Ascending aorta (tissue), 2 donors: ENCODE measurements at regions of chr1 and their contacts with region 1.

Region 1: GRCh38 chr1:111720274-111720976 is 18.8 kb downstream of the INKA2 start:
- DNase-seq: no peak
- H3K4me3 ChIP-seq: no peak overlapping the region
- H3K27ac ChIP-seq: peak overlapping the region; percentile 33 to 67
- H3K4me1 ChIP-seq: peaks cover 0 to 7% of the 10 kb centered on the region in 2 donors
- H3K27me3 ChIP-seq: no peaks in the 10 kb centered on the region
- CTCF ChIP-seq: no peak

Region 2: GRCh38 chr1:111739194-111739924 is 18.9 kb after region 1 on chr1 and contains the start of gene INKA2:
- intact Hi-C with region 1: loop called (anchors 2 kb)
- DNase-seq: peak; percentile 77 to 93
- H3K4me3 ChIP-seq: peak within 1 kb of the TSS; percentile 78 to 88
- H3K27ac ChIP-seq: peak within 1 kb of the TSS; percentile 95
- H3K4me1 ChIP-seq: peaks cover 0 to 14% of the 10 kb centered on the region in 2 donors
- H3K27me3 ChIP-seq: no peaks in the 10 kb centered on the region
- CTCF ChIP-seq: peak in 1 of 3 experiments; percentile 25
- total RNA-seq, gene INKA2: not detected